ENCODE measurements at regions of chr12 and their contacts with region 1.

Region 1: DNA sequence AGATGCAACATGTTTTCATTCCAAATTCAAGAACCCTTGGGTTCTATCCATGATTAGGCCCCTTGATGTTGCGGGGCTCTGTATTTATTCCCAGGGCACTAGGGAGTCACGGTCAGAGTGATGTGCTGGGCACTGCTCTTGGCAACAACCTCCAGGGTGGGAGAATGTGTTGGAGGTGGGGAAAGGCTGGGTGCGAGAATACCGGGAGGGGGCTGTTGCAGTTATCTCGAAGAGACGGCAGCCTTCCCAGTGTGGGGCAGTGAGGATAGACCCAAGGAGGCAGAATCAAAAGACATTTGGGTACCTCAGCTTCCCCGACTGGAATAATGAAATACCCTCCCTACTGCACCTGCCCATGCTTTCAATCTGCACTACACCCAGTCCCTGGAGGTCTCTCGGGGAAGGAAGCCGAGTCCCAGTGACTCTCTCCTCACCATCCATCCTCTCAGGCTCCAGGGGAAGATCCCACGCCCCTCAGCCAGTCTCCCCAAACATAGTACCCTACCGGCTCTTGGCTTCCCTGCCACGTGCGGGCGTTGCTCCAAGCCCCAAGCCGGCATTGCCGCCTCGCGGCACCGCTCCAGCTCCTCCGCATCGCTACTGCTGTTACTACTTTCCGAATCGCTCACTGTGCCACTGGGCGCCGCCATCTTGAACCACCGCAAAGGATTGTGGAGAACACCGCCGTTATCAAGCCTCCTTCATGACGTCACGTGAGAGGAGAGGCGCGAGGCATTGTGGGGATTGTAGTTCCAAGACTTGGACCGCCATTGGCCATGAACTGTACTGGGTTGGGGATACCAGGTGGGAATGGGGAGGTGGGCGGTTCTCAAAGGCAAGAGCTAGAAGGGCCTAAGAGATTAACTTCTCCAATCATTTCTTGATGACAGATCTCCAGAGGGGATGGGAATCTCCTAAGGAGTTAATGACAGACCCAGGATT is at the start of gene C12orf43:
- DNase-seq: peak; percentile 90
- H3K4me3 Mint-ChIP-seq: peak within 1 kb of the TSS; percentile 100
- H3K27ac Mint-ChIP-seq: peak within 1 kb of the TSS; percentile 99
- H3K4me1 Mint-ChIP-seq: peaks cover 28% of the 10 kb centered on the region
- H3K27me3 Mint-ChIP-seq: no peaks in the 10 kb centered on the region
- total RNA-seq, gene C12orf43: 34.6 and 35.3 TPM in 2 replicates

Region 2: DNA sequence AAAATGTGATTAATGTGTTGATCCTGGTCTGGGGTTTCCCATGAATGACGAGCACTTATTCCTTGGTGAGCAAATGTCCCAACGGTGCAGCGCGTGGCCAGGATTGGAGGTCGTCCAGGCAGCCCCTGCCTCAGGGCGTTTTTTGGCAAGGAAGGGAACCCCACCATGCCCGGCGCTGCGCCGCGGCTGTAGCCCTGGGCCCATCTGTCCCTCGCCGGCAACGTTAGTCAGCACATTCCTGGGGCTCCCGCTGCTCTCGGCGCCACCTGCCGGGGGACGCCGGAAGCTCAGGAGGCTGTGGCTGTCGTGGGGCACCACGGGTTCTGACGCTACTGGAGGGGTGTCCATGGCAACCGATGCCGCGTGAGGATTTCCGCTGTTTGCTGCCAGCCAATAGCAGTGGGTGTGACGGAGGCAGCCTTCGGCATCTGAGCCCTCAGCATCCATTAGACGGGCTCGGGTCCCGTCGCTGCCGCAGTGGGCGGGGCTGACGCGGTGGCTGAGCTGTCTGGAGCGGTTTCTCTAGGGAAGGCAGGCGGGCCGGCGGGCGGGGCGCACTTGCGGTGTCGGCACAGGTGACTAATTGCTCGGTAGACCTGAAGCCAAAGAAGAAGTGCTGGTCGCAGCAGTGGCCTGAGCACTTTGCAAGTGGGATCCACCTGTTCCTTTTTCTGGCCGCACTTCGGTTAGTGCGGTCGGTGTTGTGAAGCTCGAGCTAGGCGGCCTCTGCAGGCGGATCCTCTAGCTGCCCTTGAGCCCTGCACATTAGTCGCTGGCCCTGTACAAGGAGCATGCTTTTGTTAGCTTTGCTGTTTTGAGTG is 929.1 kb before region 1 on chr12:
- intact Hi-C with region 1: no loop called
- DNase-seq: peak; percentile 99
- H3K4me3 Mint-ChIP-seq: peak overlapping the region; percentile 81
- H3K27ac Mint-ChIP-seq: peak overlapping the region; percentile 86
- H3K4me1 Mint-ChIP-seq: peaks cover 32% of the 10 kb centered on the region
- H3K27me3 Mint-ChIP-seq: peaks cover 1% of the 10 kb centered on the region

Region 3: DNA sequence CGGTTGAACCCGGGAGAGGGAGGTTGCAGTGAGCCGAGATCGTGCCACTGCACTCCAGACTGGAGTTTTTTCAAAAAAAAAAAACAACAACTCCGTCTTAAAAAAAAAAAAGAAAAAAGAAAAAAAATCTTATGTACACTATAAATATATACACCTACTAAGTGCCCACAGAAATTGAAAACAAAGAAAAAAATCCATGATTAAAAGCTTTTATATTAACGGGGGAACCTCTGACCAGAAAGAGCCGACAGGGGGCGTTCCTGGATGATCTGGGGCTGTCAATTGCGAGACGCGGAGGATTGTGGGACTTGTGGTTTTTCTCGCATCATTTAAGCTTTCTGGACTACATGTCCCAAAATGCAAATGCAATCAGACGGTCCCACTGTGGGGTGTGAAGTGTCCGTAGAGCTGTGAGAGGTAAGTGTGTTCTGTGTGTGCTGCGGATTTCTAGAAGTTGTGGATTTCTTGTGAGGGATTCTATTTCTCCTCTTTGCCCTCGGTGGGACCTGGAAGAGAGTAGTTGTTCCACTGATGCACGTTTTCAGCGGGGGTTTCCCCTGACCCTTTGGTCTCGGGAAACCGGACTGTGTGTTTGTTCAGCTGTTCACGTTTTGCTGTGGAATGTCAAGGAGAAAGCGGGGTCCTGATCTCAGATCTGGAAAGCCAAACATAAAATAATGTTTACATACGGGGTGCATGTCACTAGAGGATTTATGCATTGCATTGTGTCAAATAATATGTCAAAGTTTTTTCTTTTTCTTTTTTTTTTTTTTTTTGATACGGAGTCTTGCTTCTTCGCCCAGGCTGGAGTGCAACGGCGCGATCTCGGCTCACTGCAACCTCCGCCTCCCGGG is 713.9 kb before region 1 on chr12 and contains the start of gene SIRT4:
- intact Hi-C with region 1: loop called (anchors 2 kb)
- DNase-seq: peak; percentile 85
- H3K4me3 Mint-ChIP-seq: peak within 1 kb of the TSS; percentile 96
- H3K27ac Mint-ChIP-seq: peak within 1 kb of the TSS; percentile 86
- H3K4me1 Mint-ChIP-seq: peaks cover 6% of the 10 kb centered on the region
- H3K27me3 Mint-ChIP-seq: peaks cover 5% of the 10 kb centered on the region
- total RNA-seq, gene SIRT4: 1.0 and 1.7 TPM in 2 replicates

Region 4: GRCh38 chr12:120534203-120534702 is 481.8 kb before region 1 on chr12 and contains the start of gene RNF10:
- intact Hi-C with region 1: loop called (anchors 5 kb)
- DNase-seq: peak; percentile 79
- H3K4me3 Mint-ChIP-seq: peak within 1 kb of the TSS; percentile 96
- H3K27ac Mint-ChIP-seq: peak within 1 kb of the TSS; percentile 94
- H3K4me1 Mint-ChIP-seq: peaks cover 53% of the 10 kb centered on the region
- H3K27me3 Mint-ChIP-seq: no peaks in the 10 kb centered on the region
- total RNA-seq, gene RNF10: 170 and 181 TPM in 2 replicates

Region 5: DNA sequence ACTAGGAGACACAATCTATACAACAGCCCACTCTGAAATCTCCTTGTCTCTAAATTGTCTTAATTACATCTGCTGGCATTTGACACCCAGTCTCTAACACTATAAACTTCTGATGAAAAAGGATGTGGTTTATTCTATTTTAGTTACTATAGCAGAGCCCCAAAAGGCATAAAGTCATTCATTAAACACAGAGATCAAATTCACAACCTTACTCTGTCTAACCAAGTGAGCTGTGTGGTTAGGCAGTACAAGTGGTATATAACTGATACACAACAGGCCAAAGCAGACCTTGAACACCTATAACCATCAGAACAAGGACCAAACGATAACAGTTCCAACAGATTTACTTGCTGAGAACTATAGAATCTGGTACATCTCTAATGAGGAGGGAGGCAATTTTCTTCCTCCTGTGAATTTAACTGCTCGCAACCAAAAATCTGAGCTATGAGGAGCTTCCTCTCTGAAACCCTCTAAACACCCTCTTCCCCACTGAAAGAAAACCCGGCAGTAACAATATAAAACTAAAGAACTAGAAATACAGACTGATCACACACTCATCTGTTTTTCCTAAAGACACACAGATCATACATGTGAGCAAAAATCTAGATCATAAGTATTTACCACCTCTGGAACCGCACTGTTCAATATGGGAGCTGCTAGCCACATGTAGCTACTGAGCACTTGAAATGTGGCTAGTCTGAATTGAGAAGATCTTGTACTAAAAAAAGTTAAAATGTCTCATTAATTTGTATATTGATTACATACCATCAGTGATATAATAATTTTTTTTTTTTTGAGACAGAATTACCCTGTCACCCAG is 129.7 kb before region 1 on chr12:
- intact Hi-C with region 1: no loop called
- DNase-seq: no peak
- H3K4me3 Mint-ChIP-seq: peak overlapping the region; percentile 8
- H3K27ac Mint-ChIP-seq: peak overlapping the region; percentile 59
- H3K4me1 Mint-ChIP-seq: peaks cover 16% of the 10 kb centered on the region
- H3K27me3 Mint-ChIP-seq: no peaks in the 10 kb centered on the region

Region 6: GRCh38 chr12:121033625-121034349 is 17.7 kb after region 1 on chr12:
- intact Hi-C with region 1: loop called (anchors 1 kb)
- DNase-seq: peak; percentile 35
- H3K4me3 Mint-ChIP-seq: peak overlapping the region; percentile 10
- H3K27ac Mint-ChIP-seq: peak overlapping the region; percentile 29
- H3K4me1 Mint-ChIP-seq: peaks cover 56% of the 10 kb centered on the region
- H3K27me3 Mint-ChIP-seq: no peaks in the 10 kb centered on the region

Region 7: DNA sequence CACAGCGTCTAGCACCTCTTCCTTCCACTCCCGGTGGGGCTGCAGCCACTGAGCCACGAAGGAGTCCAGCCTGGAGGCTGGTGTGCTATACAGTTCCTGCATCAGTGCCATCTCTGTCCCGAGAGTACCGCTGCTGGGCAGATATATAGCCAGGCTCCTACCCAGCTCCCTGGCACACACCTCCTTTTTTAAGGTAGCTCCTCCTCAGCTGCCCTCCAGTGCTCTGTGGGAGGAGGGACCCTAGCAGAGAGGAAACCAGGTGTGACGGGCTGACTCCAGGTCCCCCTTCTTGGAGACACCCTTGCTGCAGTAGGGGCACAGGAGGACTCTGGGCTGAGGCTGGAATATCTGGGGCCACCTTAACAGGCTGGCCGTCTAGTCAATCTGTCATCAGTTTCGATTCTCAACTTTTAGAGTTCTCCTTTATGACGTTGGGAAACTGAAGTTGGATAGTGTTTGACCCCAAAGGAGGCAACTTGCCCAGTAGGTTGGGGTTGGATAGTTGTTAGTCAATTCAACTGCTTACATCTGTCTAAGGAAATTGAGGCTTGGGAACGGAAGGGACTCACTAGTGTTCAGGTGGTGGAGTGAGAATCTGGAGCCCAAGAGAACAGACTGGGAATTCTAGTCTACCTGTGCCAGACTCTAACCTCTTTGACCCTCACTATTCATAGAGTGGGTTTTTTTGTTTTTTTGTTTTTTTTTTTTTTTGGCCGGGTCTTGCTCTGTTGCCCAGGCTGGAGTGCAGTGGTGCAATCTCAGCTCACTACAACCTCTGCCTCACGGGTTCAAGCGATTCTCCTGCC is 23.0 kb after region 1 on chr12 and contains the start of gene OASL:
- intact Hi-C with region 1: loop called (anchors 1 kb)
- DNase-seq: peak; percentile 54
- H3K4me3 Mint-ChIP-seq: peak within 1 kb of the TSS; percentile 91
- H3K27ac Mint-ChIP-seq: peak within 1 kb of the TSS; percentile 84
- H3K4me1 Mint-ChIP-seq: peaks cover 51% of the 10 kb centered on the region
- H3K27me3 Mint-ChIP-seq: peaks cover 12% of the 10 kb centered on the region
- total RNA-seq, gene OASL: 2.4 and 3.1 TPM in 2 replicates

Region 8: GRCh38 chr12:121095544-121096198 is 79.6 kb after region 1 on chr12:
- intact Hi-C with region 1: loop called (anchors 1 kb)
- DNase-seq: peak; percentile 74
- H3K4me3 Mint-ChIP-seq: peak overlapping the region; percentile 82
- H3K27ac Mint-ChIP-seq: peak overlapping the region; percentile 61
- H3K4me1 Mint-ChIP-seq: peaks cover 33% of the 10 kb centered on the region
- H3K27me3 Mint-ChIP-seq: peaks cover 4% of the 10 kb centered on the region

Region 9: GRCh38 chr12:121223292-121224285 is 207.5 kb after region 1 on chr12:
- intact Hi-C with region 1: loop called (anchors 1 kb)
- DNase-seq: peak; percentile 36
- H3K4me3 Mint-ChIP-seq: peak overlapping the region; percentile 37
- H3K27ac Mint-ChIP-seq: peak overlapping the region; percentile 89
- H3K4me1 Mint-ChIP-seq: peaks cover 44% of the 10 kb centered on the region
- H3K27me3 Mint-ChIP-seq: no peaks in the 10 kb centered on the region

Measured in activated T-helper 1 cell treated with anti-CD3 and anti-CD28 coated beads, Interleukin-12 subunit alpha, Interleukin-12 subunit beta, Interleukin-2, Interleukin-4 antibody, amounts not matched to agents 30 ng/mL and 10 ng/mL and 1 ng/mL, durations not matched to agents 14 hours and 24 hours and 36 hours (primary cell).